H1 (cell line): ENCODE measurements at regions of chr10 and their contacts with region 1.

Region 1: DNA sequence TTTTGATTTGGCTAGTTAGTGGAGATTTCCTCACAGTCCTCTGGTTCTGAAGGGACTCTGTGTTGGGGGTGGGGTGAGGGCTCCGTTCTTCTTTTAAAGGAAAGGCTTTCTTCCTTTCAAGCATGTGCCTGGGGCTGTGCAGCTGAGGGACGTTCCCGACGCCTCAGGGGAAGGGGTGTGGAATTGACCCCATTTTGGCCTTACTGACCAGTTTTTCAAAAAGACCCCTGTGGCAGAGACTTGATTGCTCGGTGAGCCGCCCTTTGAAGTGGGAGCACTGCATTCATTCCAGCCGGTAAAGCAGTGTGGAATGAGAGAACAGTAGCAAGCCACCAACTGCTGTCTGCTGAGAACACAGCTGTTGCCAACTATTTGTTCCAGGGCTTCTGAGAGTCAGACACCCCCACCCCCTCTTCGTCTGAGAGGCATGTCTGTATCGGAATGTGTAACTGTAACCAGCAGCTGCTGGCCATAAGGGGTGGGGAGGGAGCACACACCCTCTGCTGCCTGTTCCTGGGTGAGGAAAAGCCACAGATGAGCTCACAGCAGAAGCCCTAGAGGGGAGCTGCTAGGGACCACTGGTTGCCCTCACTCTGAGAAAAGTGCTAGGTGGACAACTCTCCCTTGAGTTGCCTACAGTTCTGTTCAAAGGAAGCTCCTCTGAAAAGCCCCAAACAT is 33.2 kb downstream of the WBP1L start:
- DNase-seq: peak; percentile 43 to 67
- H3K4me3 ChIP-seq: peak overlapping the region in 3 of 4 experiments; percentile 8 to 41 (median 16); a peak in 4 of 8 replicates
- H3K27ac ChIP-seq: 0 out of 2 replicates have a peak overlapping the region, but pooled peaks have one; percentile 20
- H3K4me1 ChIP-seq: peaks cover 23 to 32% (median 30%) of the 10 kb centered on the region in 4 experiments
- H3K27me3 ChIP-seq: no peaks in the 10 kb centered on the region; a peak in 2 of 7 replicates
- CTCF ChIP-seq: no peak
- EP300 ChIP-seq: peak in 1 of 2 experiments; percentile 46; a peak in 1 of 3 replicates
- POLR2A ChIP-seq: no peak
- RAD21 ChIP-seq: no peak; a peak in 1 of 4 replicates

Region 2: GRCh38 chr10:102492983-102493382 is 283.9 kb before region 1 on chr10:
- CTCF ChIA-PET with region 1: no interaction called
- POLR2A ChIA-PET with region 1: no interaction called
- DNase-seq: no peak
- H3K4me3 ChIP-seq: no peak overlapping the region
- H3K27ac ChIP-seq: no peak overlapping the region
- H3K4me1 ChIP-seq: no peaks in the 10 kb centered on the region
- H3K27me3 ChIP-seq: no peaks in the 10 kb centered on the region
- CTCF ChIP-seq: no peak
- EP300 ChIP-seq: no peak
- POLR2A ChIP-seq: no peak
- RAD21 ChIP-seq: no peak

Region 3: GRCh38 chr10:102704915-102705314 is 72.0 kb before region 1 on chr10:
- CTCF ChIA-PET with region 1: no interaction called
- POLR2A ChIA-PET with region 1: no interaction called
- DNase-seq: no peak
- H3K4me3 ChIP-seq: no peak overlapping the region
- H3K27ac ChIP-seq: no peak overlapping the region
- H3K4me1 ChIP-seq: no peaks in the 10 kb centered on the region
- H3K27me3 ChIP-seq: no peaks in the 10 kb centered on the region
- CTCF ChIP-seq: no peak
- EP300 ChIP-seq: no peak
- POLR2A ChIP-seq: no peak
- RAD21 ChIP-seq: no peak

Region 4: DNA sequence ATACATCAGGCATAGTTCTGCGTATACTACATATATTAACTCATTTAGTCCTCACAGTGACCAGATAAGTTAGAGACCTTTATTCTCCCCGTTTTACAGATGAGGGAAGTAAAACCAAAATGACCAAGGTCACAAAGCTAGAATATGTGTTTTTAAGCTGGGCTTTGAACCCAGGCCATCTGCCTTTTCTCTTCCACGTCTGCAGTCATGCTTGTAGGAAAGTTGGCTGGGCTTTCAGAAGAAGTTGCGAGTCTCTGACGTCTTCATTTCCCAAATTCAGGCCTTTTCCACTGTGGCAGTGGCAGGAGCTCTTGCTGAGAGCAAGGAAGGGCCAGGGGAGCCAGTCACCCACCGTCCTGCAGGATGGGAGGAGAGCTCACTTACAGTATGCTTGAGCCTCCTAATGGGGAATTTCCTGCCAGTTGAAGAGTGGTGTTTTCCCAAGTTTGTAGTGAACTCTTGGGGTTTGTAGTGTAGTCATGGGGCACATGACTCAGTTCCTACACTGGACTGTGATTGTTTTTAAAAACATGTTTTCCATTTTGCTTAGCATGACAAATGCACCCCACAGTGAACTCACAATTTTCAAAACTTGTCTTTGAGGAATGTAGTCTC is 26.1 kb after region 1 on chr10:
- CTCF ChIA-PET with region 1: interaction called, 5 read pairs
- POLR2A ChIA-PET with region 1: interaction called, 40 read pairs
- DNase-seq: peak in 1 of 2 experiments; percentile 61
- H3K4me3 ChIP-seq: no peak overlapping the region
- H3K27ac ChIP-seq: peak overlapping the region; percentile 55
- H3K4me1 ChIP-seq: peaks cover 19 to 33% (median 29%) of the 10 kb centered on the region in 4 experiments
- H3K27me3 ChIP-seq: no peaks in the 10 kb centered on the region
- CTCF ChIP-seq: no peak
- EP300 ChIP-seq: no peak
- POLR2A ChIP-seq: no peak
- RAD21 ChIP-seq: no peak